HCT116 (cell line): ENCODE measurements at regions of chr17 and their contacts with region 1.

Region 1: DNA sequence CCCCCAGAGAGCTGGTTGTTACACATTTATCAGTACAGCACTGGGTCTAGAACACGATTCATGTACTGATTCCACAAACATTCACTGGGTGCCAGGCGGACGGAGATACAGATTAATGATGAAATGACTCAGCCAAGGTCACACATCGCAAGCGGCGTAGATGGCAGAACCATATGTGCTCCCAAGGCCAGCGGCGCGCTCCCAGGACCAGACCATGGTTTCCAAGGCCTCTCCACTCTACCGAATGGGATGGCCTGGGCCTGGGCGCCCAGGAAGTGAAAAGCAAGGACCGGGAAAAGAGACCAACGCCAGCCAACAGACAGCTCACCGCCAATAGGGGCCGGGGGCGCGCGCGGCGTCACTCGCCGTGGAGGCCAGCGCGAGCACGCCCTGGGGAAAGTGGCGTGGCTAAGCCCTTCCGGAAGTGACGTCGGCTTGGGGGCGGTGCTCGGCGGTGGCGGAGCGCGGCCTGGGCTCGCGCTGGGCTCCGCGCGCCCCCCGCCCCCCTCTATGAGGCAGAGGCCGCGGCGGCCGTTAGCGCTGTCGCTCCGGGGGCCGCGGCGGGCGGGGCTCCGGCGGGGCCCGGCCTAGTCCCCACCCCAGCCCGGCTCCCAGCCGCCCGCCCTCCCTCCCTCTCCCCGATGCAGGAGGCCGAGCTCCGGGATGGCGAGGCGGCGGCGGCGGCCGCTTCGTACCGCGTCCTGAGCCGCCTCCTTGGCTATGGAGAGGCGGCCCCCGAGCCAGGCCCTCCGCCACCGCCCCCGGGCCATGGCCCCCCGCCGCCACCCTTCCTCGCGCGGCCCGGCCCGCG is at the start of gene SOCS7:
- DNase-seq: peak; percentile 84
- ATAC-seq: peak; percentile 91
- H3K4me3 ChIP-seq: peak within 1 kb of the TSS; percentile 58 to 68
- H3K27ac ChIP-seq: peak within 1 kb of the TSS; percentile 60
- H3K4me1 ChIP-seq: peaks cover 4 to 32% of the 10 kb centered on the region in 2 experiments; a peak in 3 of 4 replicates
- H3K27me3 ChIP-seq: no peaks in the 10 kb centered on the region
- CTCF ChIP-seq: no peak
- POLR2A ChIP-seq: peak; percentile 33
- RAD21 ChIP-seq: no peak
- total RNA-seq, gene SOCS7: 49.9 TPM

Region 2: GRCh38 chr17:37373530-37374159 is 978.0 kb before region 1 on chr17:
- CTCF ChIA-PET with region 1: no interaction called
- POLR2A ChIA-PET with region 1: no interaction called
- RAD21 ChIA-PET with region 1: no interaction called
- intact Hi-C with region 1: no loop called
- DNase-seq: peak; percentile 76
- ATAC-seq: peak; percentile 98
- H3K4me3 ChIP-seq: no peak overlapping the region
- H3K27ac ChIP-seq: no peak overlapping the region
- H3K4me1 ChIP-seq: peaks cover 0 to 5% of the 10 kb centered on the region in 2 experiments; a peak in 2 of 4 replicates
- H3K27me3 ChIP-seq: no peaks in the 10 kb centered on the region
- CTCF ChIP-seq: peak; percentile 99 to 100 (median 100)
- POLR2A ChIP-seq: no peak
- RAD21 ChIP-seq: peak; percentile 99

Region 3: DNA sequence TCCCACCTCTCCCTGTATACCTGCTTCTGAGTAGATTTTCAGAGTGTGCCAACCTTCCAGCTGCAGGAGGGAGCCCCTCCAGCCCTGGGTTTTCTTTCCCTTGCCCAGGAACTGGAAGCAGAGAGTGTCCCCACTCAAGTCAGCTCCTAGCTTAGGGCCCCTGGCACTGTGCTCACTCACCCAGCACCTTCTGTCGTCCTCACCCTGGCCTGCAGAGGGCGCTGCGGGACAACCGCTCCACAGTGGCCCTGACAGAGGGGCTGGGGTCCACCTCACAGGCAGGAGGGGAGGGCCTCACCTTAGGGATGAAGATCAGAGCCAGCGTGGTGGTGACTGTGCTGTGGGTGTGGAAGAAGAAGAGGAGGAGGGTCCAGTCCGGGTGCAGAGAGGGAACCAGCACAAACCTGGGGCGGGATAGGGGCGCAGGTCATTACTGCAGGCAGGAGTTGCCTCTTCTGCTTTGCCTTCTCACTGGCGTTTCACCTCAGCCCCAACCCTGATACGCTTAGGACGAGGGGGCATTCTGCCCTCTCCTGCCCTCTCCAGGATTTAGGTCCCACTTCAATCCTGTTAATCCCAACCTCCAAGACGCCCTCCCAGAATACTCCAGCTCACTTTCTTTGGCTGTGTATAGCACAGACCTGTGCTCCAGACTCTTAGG is 17.9 kb before region 1 on chr17:
- CTCF ChIA-PET with region 1: interaction called, 23 read pairs
- POLR2A ChIA-PET with region 1: no interaction called
- RAD21 ChIA-PET with region 1: no interaction called
- intact Hi-C with region 1: no loop called
- DNase-seq: no peak
- ATAC-seq: peak; percentile 90
- H3K4me3 ChIP-seq: no peak overlapping the region
- H3K27ac ChIP-seq: no peak overlapping the region
- H3K4me1 ChIP-seq: no peaks in the 10 kb centered on the region
- H3K27me3 ChIP-seq: no peaks in the 10 kb centered on the region
- CTCF ChIP-seq: peak; percentile 60 to 98 (median 93); a peak in 5 of 6 replicates
- POLR2A ChIP-seq: no peak
- RAD21 ChIP-seq: peak; percentile 74

Region 4: DNA sequence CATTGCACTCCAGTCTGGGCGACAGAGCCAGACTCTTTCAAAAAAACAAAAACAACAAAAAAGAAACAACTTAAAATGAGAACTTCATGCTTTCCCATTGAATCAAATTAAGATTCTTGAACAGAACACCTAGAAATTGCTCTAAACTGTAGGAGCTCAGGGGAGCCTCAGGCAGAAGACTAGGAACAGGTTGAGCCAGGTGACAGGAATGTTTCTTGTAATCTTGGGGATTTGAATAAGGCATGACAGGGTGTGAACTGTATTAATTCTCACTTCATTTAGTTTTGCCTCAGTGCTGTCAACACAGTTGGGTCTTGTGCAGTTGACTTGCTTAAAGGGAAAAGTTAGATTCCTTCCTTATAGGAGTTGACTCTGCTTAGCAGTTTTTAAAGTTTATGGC is 27.8 kb after region 1 on chr17:
- CTCF ChIA-PET with region 1: interaction called, 10 read pairs
- POLR2A ChIA-PET with region 1: no interaction called
- RAD21 ChIA-PET with region 1: no interaction called
- intact Hi-C with region 1: no loop called
- DNase-seq: no peak
- ATAC-seq: no peak
- H3K4me3 ChIP-seq: no peak overlapping the region
- H3K27ac ChIP-seq: no peak overlapping the region
- H3K4me1 ChIP-seq: no peaks in the 10 kb centered on the region
- H3K27me3 ChIP-seq: no peaks in the 10 kb centered on the region
- CTCF ChIP-seq: no peak
- POLR2A ChIP-seq: no peak
- RAD21 ChIP-seq: no peak

Region 5: GRCh38 chr17:38403491-38403890 is 51.9 kb after region 1 on chr17:
- CTCF ChIA-PET with region 1: interaction called, 15 read pairs
- POLR2A ChIA-PET with region 1: no interaction called
- RAD21 ChIA-PET with region 1: interaction called in 1 of 2 experiments, 5 read pairs
- intact Hi-C with region 1: no loop called
- DNase-seq: no peak
- ATAC-seq: peak; percentile 74
- H3K4me3 ChIP-seq: no peak overlapping the region
- H3K27ac ChIP-seq: no peak overlapping the region
- H3K4me1 ChIP-seq: peaks cover 0 to 5% of the 10 kb centered on the region in 2 experiments; a peak in 1 of 4 replicates
- H3K27me3 ChIP-seq: no peaks in the 10 kb centered on the region
- CTCF ChIP-seq: no peak
- POLR2A ChIP-seq: no peak
- RAD21 ChIP-seq: no peak

Region 6: DNA sequence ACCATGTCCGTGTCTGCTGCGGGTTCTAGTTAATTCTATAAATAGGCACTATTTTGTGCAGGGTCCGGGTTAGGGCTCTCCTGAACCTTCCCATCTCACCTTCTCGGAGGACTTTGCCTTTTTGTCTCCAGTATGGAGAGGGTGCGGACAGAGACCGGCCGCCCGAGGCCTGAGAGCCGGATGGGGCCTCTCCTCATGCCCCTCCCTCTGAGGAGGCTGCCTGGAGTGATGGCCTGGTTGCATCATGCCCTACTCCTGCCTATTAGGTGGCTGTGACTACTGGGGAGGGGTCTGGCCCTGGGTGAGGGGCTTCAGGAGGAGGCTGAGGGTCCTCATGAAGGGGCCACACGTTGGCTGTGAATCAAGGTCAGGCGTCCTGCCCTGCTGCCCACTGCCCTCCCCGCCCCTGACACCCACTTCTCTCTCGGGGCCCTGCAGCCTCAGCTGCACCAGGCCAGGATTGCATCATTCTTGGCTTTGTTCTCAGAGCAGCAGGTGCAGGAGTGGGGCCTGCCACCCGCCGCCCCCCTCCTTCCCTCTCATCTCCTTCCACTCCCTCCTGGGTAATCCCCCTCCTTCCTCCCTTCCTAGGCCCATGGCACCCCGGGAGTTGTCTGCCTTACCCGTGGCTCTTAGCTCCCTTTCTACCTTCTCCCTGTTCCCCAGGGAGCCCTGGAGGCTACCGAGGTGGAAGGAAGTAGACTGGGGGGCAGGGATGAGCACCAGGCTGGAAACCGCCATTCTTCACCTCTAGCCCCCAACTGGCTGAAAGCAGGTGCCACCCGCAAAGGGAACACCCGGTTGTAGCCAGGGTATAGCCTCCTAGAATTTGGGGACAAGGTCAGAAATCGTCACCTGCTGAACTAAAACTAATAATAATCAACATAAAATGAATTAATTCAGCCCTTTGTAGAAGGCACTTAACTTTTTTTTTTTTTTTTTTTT is 63.9 kb after region 1 on chr17:
- CTCF ChIA-PET with region 1: interaction called, 65 read pairs
- POLR2A ChIA-PET with region 1: interaction called, 13 read pairs
- RAD21 ChIA-PET with region 1: interaction called, 5 to 16 read pairs
- intact Hi-C with region 1: loop called (anchors 1 kb)
- DNase-seq: peak; percentile 23
- ATAC-seq: peak; percentile 46
- H3K4me3 ChIP-seq: peak overlapping the region in 1 of 2 experiments; percentile 26; a peak in 2 of 4 replicates
- H3K27ac ChIP-seq: peak overlapping the region; percentile 8; the same call in 1 of the 2 replicates
- H3K4me1 ChIP-seq: peaks cover 12 to 14% of the 10 kb centered on the region in 2 experiments
- H3K27me3 ChIP-seq: no peaks in the 10 kb centered on the region
- CTCF ChIP-seq: no peak
- POLR2A ChIP-seq: peak; percentile 47
- RAD21 ChIP-seq: no peak

Region 7: GRCh38 chr17:38485146-38485468 is 133.5 kb after region 1 on chr17:
- CTCF ChIA-PET with region 1: interaction called, 3 read pairs
- POLR2A ChIA-PET with region 1: no interaction called
- RAD21 ChIA-PET with region 1: no interaction called
- intact Hi-C with region 1: loop called (anchors 10 kb)
- DNase-seq: no peak
- ATAC-seq: no peak
- H3K4me3 ChIP-seq: no peak overlapping the region
- H3K27ac ChIP-seq: no peak overlapping the region
- H3K4me1 ChIP-seq: peaks cover 0 to 4% of the 10 kb centered on the region in 2 experiments; a peak in 1 of 4 replicates
- H3K27me3 ChIP-seq: no peaks in the 10 kb centered on the region
- CTCF ChIP-seq: no peak
- POLR2A ChIP-seq: no peak
- RAD21 ChIP-seq: no peak

Region 8: GRCh38 chr17:38667099-38667786 is 315.6 kb after region 1 on chr17:
- CTCF ChIA-PET with region 1: interaction called, 10 read pairs
- POLR2A ChIA-PET with region 1: no interaction called
- RAD21 ChIA-PET with region 1: no interaction called
- intact Hi-C with region 1: loop called (anchors 2 kb)
- DNase-seq: peak; percentile 57
- ATAC-seq: peak; percentile 65
- H3K4me3 ChIP-seq: no peak overlapping the region
- H3K27ac ChIP-seq: no peak overlapping the region
- H3K4me1 ChIP-seq: peaks cover 6 to 20% of the 10 kb centered on the region in 2 experiments; a peak in 3 of 4 replicates
- H3K27me3 ChIP-seq: no peaks in the 10 kb centered on the region; the same call in 1 of the 2 replicates
- CTCF ChIP-seq: peak; percentile 98 to 100 (median 100)
- POLR2A ChIP-seq: no peak
- RAD21 ChIP-seq: peak; percentile 99